ENCODE measurements at regions of chr1 and their contacts with region 1.

Region 1: GRCh38 chr1:156892190-156893047 is 1.1 kb upstream of the PEAR1 start:
- H3K4me3 ChIP-seq: no peak overlapping the region
- H3K27ac ChIP-seq: no peak overlapping the region
- H3K4me1 ChIP-seq: no peaks in the 10 kb centered on the region
- CTCF ChIP-seq: peak; percentile 86

Region 2: DNA sequence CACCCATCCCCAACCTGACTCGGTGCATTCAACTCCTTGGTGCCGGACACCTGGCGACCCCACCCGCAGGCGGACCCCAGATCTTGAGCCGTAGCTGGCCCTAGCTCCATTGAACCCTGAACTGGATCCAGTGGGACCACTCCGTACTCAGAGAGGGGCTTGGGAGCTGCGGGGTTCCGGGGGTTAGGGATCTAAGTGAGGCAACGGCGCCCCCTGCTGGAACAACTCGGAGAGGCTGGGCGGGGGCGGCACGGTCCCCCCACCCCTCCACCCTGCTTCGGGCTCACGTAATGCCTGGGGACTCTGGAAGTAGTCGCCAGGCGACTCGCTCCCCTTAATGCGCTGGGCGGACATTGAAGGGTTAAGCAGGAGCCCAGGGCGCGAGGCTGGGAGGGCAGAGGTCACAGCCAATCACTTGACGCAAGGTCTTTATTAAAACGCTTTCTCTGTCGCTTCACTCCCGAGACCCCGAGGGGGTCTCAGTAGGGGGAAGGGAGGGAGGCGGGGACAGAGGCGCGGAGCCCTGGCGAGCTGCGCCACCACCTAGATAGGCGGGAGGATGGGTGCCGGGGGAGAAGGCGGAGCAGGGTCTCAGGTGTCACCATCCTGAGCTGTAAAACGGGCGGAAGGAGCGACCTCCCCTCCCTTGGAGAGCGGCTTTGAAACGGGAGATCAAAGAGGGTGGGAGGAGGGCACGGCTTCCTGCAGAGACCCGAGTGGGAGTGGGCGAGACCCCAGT is 186.3 kb before region 1 on chr1:
- CTCF ChIA-PET with region 1: interaction called, 12 read pairs
- POLR2A ChIA-PET with region 1: interaction called, 3 read pairs
- H3K4me3 ChIP-seq: peak overlapping the region; percentile 36
- H3K27ac ChIP-seq: peak overlapping the region; percentile 39; the same call in 1 of the 2 replicates
- H3K4me1 ChIP-seq: peaks cover 12% of the 10 kb centered on the region
- CTCF ChIP-seq: peak; percentile 92

Region 3: DNA sequence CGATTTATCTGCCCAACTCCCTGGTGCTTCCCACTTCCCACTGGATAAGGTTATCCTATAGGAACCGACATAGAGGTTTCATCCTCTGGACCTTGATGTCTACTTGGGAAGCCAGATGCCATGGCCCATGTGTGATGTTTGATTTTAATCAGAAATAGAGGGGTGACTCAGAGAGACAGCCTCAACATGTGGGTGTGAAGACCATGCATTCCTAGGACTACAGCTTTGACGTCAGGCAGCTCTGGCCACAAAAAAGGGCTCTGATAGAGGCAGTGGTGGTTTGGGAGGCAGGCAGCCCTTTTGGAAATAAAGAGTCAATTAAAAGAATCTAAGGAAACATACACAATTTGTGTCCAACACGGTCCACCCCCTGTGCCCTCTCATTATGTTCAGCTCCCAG is 70.6 kb before region 1 on chr1:
- CTCF ChIA-PET with region 1: interaction called, 12 read pairs
- POLR2A ChIA-PET with region 1: interaction called, 6 read pairs
- H3K4me3 ChIP-seq: no peak overlapping the region
- H3K27ac ChIP-seq: no peak overlapping the region
- H3K4me1 ChIP-seq: no peaks in the 10 kb centered on the region
- CTCF ChIP-seq: no peak

Region 4: GRCh38 chr1:156852418-156852874 is 40.0 kb before region 1 on chr1:
- CTCF ChIA-PET with region 1: interaction called, 79 read pairs
- POLR2A ChIA-PET with region 1: no interaction called
- H3K4me3 ChIP-seq: no peak overlapping the region
- H3K27ac ChIP-seq: no peak overlapping the region
- H3K4me1 ChIP-seq: no peaks in the 10 kb centered on the region
- CTCF ChIP-seq: no peak

Region 5: DNA sequence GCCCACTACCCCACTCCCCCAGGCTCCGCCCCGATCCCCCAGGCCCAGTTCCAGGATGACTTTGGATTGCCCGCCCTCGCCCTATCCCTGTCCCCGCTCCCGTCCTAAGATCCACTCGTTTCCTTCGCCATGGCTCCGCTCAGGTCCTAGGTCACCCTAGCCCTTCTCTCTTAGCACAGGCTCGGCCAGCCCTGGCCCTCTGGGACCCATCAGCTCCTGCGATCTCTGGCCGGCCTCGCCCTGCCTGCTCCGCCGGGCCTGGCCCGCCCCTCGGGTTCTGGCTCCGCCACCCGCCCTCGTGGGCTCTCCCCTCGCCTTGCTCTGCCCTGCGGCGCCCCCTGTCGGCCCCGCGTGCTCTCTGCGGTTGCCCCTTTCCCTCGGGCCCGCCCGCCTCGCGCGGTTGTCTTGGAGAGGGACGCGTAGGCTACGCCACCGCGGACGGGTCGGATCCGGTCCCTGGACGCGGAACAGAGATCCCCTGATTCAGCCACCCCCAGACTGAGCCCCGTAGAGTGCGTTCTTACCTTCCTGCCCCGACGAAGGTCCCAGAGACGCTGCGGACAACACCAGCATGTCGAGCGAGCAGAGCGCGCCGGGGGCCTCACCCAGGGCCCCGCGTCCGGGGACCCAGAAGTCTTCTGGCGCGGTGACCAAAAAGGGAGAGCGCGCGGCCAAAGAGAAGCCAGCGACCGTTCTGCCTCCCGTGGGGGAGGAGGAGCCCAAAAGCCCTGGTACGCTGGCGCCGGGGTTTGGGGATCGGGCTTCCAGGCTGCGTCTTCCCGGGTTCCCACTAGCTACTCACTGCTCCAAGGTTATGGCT is 28.0 kb after region 1 on chr1 and contains the start of gene LRRC71:
- CTCF ChIA-PET with region 1: interaction called, 199 read pairs
- POLR2A ChIA-PET with region 1: no interaction called
- H3K4me3 ChIP-seq: no peak within 1 kb of the TSS
- H3K27ac ChIP-seq: no peak within 1 kb of the TSS
- H3K4me1 ChIP-seq: no peaks in the 10 kb centered on the region
- CTCF ChIP-seq: peak; percentile 88

Region 6: GRCh38 chr1:157073944-157074767 is 181.7 kb after region 1 on chr1:
- CTCF ChIA-PET with region 1: interaction called, 17 read pairs
- POLR2A ChIA-PET with region 1: no interaction called
- H3K4me3 ChIP-seq: no peak overlapping the region
- H3K27ac ChIP-seq: no peak overlapping the region
- H3K4me1 ChIP-seq: no peaks in the 10 kb centered on the region
- CTCF ChIP-seq: peak; percentile 57; the same call in 1 of the 2 replicates